Colonic mucosa (tissue), 4 donors: ENCODE measurements at regions of chr22 and their contacts with region 1.

Region 1: GRCh38 chr22:36123673-36124630 is 36.6 kb downstream of the APOL3 start:
- DNase-seq: peak; percentile 95
- H3K4me3 ChIP-seq: peak overlapping the region; percentile 17
- H3K27ac ChIP-seq: peak overlapping the region; percentile 84
- H3K4me1 ChIP-seq: no peaks in the 10 kb centered on the region
- H3K27me3 ChIP-seq: no peaks in the 10 kb centered on the region
- CTCF ChIP-seq: peak; percentile 98

Region 2: GRCh38 chr22:35350539-35351503 is 773.1 kb before region 1 on chr22:
- intact Hi-C with region 1: loop called (anchors 5 kb)
- DNase-seq: peak; percentile 93
- H3K4me3 ChIP-seq: peak overlapping the region; percentile 42
- H3K27ac ChIP-seq: peak overlapping the region; percentile 12
- H3K4me1 ChIP-seq: no peaks in the 10 kb centered on the region
- H3K27me3 ChIP-seq: no peaks in the 10 kb centered on the region
- CTCF ChIP-seq: peak; percentile 92

Region 3: DNA sequence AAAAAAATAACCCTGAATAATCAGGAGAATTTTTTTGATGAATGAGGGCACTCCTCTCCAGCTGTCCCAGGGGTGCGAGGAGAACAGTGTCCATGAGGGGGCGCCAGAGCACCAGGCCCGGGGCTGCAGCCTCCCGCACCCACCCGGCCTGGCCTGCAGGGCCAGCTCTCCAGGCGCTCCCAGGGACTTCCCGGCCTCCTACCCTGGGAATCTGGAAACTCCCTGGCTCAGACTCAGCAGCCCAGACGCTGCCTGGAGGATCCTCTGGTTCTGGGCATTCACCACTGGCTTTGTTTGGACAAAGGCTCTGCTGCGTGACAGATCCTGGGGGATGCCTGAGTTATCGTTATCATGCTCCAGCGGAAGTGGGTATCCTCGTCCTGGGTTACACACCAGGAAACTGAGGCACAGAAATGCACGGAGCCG is 693.0 kb before region 1 on chr22:
- intact Hi-C with region 1: loop called (anchors 10 kb)
- DNase-seq: peak; percentile 90
- H3K4me3 ChIP-seq: no peak overlapping the region
- H3K27ac ChIP-seq: peak overlapping the region; percentile 32
- H3K4me1 ChIP-seq: no peaks in the 10 kb centered on the region
- H3K27me3 ChIP-seq: no peaks in the 10 kb centered on the region
- CTCF ChIP-seq: peak; percentile 97

Region 4: GRCh38 chr22:35627264-35628041 is 496.5 kb before region 1 on chr22:
- intact Hi-C with region 1: loop called (anchors 5 kb)
- DNase-seq: peak; percentile 91
- H3K4me3 ChIP-seq: peak overlapping the region; percentile 50
- H3K27ac ChIP-seq: peak overlapping the region; percentile 96
- H3K4me1 ChIP-seq: no peaks in the 10 kb centered on the region
- H3K27me3 ChIP-seq: no peaks in the 10 kb centered on the region
- CTCF ChIP-seq: peak; percentile 35

Region 5: GRCh38 chr22:35921777-35922176 is 202.2 kb before region 1 on chr22:
- intact Hi-C with region 1: loop called (anchors 5 kb)
- DNase-seq: peak; percentile 76
- H3K4me3 ChIP-seq: no peak overlapping the region
- H3K27ac ChIP-seq: peak overlapping the region; percentile 11
- H3K4me1 ChIP-seq: no peaks in the 10 kb centered on the region
- H3K27me3 ChIP-seq: no peaks in the 10 kb centered on the region
- CTCF ChIP-seq: peak; percentile 36

Region 6: DNA sequence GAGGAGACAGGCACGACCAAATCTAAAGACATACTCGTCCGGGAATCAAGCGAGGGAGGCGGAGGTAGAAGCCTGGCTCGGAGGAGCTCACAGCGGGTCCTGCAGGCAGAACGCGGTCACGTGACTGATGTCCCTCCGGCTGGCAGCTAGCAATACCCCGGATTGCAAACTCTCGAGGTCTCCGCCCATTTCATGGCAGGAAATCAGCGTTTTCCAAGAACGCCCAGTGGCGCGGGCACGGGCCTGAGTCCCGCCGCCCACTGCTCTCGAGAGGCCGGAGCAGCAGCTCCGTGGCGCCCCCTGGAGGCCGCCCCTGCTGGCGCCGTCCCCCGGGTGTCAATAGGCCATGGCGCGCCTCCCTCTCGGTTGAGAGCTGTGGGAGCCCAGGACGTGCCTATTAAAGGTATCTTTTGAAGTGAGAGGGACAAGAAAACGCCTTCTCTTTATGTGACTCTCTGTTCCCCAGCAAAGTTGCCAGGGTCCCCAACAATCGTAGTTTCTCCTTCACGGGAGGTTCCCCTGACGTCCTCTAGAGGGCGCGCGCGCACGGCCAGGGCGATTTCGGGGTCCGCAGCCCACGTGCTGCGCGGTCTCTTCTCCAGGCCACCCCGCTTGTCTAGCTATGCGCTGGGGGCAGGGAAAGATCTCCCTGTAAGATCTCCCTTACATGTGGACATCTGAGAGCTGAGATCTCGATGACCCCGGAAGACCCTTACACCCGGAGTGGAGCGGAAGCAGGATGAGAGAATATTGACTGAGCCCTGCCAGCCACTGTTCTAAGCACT is 58.0 kb before region 1 on chr22:
- intact Hi-C with region 1: loop called (anchors 1 kb)
- DNase-seq: peak; percentile 87
- H3K4me3 ChIP-seq: peak overlapping the region; percentile 36
- H3K27ac ChIP-seq: peak overlapping the region; percentile 53
- H3K4me1 ChIP-seq: no peaks in the 10 kb centered on the region
- H3K27me3 ChIP-seq: no peaks in the 10 kb centered on the region
- CTCF ChIP-seq: peak; percentile 100

Region 7: DNA sequence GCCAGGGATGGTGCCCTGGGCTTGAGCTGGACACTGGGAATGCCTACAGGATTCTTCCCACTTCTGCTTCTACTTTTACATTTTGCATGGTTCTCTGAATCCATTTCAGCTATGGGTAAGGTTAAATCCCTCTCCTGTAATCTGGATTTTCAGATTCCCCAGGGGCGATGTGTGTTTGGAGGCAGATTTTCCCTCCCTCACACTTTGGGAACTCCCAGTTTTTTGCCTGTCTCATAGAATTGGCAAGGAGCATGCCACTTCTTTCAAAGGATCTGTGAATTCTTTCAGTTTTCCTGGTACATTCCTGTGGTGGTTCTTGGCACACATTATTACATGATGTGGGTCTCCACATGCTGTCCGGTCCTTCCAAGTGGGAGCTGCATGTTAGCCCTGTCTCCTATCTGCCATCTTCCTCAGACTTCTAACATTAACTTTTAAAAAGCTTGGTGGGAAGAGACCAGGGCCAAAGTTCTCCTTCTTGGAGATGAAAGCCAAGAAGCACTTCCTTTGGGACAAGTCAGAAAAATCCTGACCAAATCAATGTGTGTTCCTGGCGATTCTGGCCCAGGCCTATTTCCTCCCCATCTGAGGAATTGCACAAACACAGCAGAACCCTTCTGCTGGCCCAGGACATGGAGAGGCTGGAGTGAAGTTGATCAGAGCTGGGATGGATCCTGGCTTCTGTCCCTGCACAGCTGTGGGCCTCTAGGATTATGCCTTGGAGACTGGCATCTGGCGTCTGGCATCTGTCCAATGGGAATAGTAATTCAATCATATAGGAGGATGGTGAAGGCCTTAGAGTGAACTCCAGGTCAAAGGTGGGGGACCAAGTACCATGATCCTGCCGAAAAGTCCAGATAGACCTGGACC is 120.8 kb after region 1 on chr22:
- intact Hi-C with region 1: no loop called
- DNase-seq: no peak
- H3K4me3 ChIP-seq: no peak overlapping the region
- H3K27ac ChIP-seq: no peak overlapping the region
- H3K4me1 ChIP-seq: no peaks in the 10 kb centered on the region
- H3K27me3 ChIP-seq: no peaks in the 10 kb centered on the region
- CTCF ChIP-seq: no peak

Region 8: DNA sequence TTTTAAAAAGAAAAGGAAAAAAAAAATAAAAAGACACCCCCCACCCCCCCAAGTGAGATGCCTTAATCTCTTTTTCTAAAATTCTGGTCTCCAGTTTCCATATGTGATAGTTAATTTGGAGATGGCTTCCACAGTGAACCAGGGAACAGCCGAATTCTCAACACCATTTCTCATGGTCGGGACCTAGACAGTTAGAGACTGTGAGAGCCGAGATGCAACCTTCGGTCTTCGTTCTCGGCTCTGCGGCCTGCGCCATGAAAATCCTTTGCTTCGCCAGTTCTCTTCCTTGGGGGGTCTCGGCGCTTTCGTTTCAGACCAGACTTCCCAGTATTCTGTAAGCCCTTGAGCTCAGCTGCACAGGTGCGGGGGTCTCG is 578.9 kb after region 1 on chr22:
- intact Hi-C with region 1: no loop called
- DNase-seq: no peak
- H3K4me3 ChIP-seq: no peak overlapping the region
- H3K27ac ChIP-seq: no peak overlapping the region
- H3K4me1 ChIP-seq: no peaks in the 10 kb centered on the region
- H3K27me3 ChIP-seq: peaks cover 12% of the 10 kb centered on the region
- CTCF ChIP-seq: no peak